Activated CD4-positive, alpha-beta memory T cell treated with anti-CD3 and anti-CD28 coated beads, Interleukin-2, amount 10 ng/mL, durations not matched to agents 7 days and 5 days (primary cell): ENCODE measurements at regions of chr15 and their contacts with region 1.

Region 1: GRCh38 chr15:41621200-41622193 is 38.7 kb upstream of the MGA start:
- DNase-seq: peak; percentile 81
- H3K4me3 Mint-ChIP-seq: peak overlapping the region; percentile 71
- H3K27ac Mint-ChIP-seq: peak overlapping the region; percentile 47
- H3K4me1 Mint-ChIP-seq: peaks cover 20% of the 10 kb centered on the region
- H3K27me3 Mint-ChIP-seq: peaks cover 18% of the 10 kb centered on the region

Region 2: DNA sequence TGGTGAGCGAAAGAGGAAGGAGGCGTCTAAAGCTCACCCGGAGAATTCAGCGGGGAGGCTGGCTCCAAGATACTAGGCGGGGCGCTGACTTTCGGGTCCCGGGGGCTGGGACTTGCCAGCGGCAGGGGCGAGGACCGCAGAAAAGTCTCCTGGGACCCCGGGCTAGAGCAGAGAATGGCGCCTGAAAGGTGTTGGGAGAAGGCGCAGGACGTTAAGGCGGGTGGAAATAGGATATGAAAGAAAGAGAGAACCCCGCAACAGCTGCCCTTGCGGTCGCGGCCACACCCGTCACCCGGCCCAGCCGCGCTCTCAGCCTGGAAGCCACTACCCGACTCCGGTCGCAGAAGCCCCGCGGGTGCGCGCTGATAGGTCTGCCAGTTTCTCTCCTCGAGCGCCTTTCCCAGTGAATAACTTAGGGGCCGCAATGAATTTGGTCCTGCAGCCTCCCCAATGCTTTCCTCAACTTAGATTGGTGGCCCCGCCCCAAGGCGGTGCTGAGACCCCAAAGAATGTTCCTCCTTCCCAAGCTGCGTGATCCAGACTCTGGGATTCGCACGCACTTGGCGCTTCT is 108.5 kb before region 1 on chr15:
- CTCF ChIA-PET with region 1: no interaction called
- POLR2A ChIA-PET with region 1: no interaction called
- DNase-seq: peak; percentile 56
- H3K4me3 Mint-ChIP-seq: peak overlapping the region; percentile 63
- H3K27ac Mint-ChIP-seq: no peak overlapping the region
- H3K4me1 Mint-ChIP-seq: peaks cover 38% of the 10 kb centered on the region
- H3K27me3 Mint-ChIP-seq: peaks cover 38% of the 10 kb centered on the region

Region 3: GRCh38 chr15:41597787-41598186 is 23.7 kb before region 1 on chr15:
- CTCF ChIA-PET with region 1: no interaction called
- POLR2A ChIA-PET with region 1: no interaction called
- DNase-seq: no peak
- H3K4me3 Mint-ChIP-seq: no peak overlapping the region
- H3K27ac Mint-ChIP-seq: no peak overlapping the region
- H3K4me1 Mint-ChIP-seq: no peaks in the 10 kb centered on the region
- H3K27me3 Mint-ChIP-seq: peaks cover 21% of the 10 kb centered on the region

Region 4: DNA sequence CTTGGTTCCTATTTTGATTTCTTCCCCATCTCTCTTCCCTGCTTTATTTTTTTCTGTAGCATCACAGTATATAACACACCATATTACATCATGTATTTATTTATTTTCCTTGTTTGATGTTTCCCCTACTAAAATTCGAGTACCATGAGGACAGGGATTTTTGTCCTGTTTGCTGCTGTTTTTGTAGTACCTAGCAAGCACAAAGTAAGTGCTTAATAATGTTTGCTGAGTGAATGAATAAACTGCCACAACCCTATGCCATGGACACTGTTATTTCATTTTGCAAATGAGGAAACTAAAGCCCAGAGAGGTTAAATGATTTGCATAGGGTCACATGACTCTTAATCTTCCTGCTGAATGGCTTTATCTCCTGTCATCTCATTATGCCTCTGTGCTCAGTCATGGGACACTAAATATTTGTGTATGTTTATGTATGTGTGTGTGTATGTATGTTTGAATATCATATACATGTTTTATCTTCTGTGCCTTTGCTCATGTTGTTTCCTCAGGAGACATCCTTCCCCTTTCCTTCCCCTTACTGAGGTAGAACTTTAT is 12.7 kb after region 1 on chr15:
- CTCF ChIA-PET with region 1: no interaction called
- POLR2A ChIA-PET with region 1: no interaction called
- DNase-seq: no peak
- H3K4me3 Mint-ChIP-seq: no peak overlapping the region
- H3K27ac Mint-ChIP-seq: no peak overlapping the region
- H3K4me1 Mint-ChIP-seq: peaks cover 5% of the 10 kb centered on the region
- H3K27me3 Mint-ChIP-seq: no peaks in the 10 kb centered on the region

Region 5: DNA sequence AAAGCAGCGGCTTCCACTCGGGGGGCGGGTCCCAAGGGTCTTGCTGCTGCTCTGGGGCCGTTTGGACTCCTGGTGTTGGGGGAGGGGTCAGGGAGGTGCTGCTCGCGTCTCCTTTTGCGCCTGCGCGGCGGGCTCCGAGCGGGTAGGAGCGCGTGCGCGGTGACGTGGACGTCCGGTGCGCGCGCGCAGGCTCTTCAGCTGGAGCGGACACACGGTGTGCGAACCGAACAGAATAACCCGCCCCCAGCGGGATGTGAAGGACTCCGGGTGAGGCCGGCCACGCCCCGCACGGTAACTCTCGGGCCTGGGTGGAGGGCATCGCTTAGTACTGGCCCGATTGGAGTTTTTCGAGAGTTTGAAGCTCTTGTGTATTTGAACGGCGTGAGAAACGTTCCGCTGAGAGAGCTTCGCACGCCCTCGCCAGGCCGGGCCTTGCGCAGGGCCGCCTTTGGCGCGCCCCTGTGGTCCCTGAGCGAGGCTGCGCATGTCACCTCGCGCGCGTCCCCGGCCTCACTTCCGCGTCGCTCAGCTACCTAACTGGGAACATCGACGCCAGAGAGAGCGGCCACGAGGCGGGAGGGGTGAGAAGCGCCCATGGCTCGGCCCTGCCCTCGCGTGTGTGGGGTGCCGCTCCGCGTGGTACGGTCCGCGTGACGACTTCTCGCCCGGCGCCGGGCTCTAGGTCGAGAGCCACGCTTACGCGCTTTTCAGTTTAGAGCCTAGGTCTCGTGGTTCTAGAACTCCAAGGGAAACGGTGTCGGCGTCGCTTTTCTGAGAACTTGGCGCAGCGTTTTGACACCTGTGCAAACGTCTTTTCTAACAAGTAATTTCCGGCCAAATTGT is 39.0 kb after region 1 on chr15 and contains the start of gene MGA:
- CTCF ChIA-PET with region 1: no interaction called
- POLR2A ChIA-PET with region 1: interaction called, 22 read pairs
- DNase-seq: peak; percentile 93
- H3K4me3 Mint-ChIP-seq: peak within 1 kb of the TSS; percentile 89
- H3K27ac Mint-ChIP-seq: peak within 1 kb of the TSS; percentile 89
- H3K4me1 Mint-ChIP-seq: peaks cover 34% of the 10 kb centered on the region
- H3K27me3 Mint-ChIP-seq: peaks cover 23% of the 10 kb centered on the region
- total RNA-seq, gene MGA: 28.2 to 30.3 TPM